HEK293 (cell line): ENCODE measurements at regions of chr17 and their contacts with region 1.

Region 1: GRCh38 chr17:37373530-37374159 is 2.1 kb upstream of the C17orf78 start:
- H3K4me3 ChIP-seq: no peak overlapping the region
- H3K27ac ChIP-seq: 0 out of 2 replicates have a peak overlapping the region, but pooled peaks have one; percentile 30
- H3K4me1 ChIP-seq: no peaks in the 10 kb centered on the region; the same call in 1 of the 2 replicates
- CTCF ChIP-seq: peak; percentile 99

Region 2: DNA sequence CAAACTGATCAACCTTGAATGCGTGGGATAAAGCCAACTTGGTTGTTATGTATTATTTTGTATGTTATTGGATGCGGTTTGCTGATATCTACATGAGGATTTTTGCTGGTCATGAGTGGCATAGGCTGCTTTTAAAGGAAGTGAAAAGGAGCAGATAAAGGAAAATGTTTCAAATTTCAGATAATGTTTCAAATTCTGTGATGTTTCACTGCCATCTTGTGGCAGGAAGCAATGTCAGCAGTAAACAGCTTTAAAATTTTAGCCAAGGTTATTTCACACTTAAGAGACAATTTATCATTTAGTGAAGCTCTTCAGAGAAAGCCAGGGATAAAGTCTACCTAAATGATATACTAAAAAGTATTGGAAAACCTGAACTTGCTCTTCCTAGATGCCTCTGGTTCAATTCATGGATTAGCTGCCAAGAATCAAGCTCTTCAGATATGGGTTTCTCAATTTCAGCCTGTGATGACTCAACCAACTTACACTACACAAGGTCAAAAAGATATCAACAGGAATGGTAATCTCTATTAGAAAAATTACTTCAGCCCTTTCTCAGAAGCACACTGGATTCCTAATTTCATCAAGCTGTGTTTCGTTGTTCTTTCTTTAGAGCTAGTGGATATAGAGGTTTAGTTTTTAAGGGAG is 133.8 kb before region 1 on chr17:
- CTCF ChIA-PET with region 1: interaction called, 16 read pairs
- POLR2A ChIA-PET with region 1: no interaction called
- H3K4me3 ChIP-seq: no peak overlapping the region
- H3K27ac ChIP-seq: no peak overlapping the region
- H3K4me1 ChIP-seq: no peaks in the 10 kb centered on the region
- CTCF ChIP-seq: 0 out of 2 replicates have a peak, but pooled peaks have one; percentile 38

Region 3: DNA sequence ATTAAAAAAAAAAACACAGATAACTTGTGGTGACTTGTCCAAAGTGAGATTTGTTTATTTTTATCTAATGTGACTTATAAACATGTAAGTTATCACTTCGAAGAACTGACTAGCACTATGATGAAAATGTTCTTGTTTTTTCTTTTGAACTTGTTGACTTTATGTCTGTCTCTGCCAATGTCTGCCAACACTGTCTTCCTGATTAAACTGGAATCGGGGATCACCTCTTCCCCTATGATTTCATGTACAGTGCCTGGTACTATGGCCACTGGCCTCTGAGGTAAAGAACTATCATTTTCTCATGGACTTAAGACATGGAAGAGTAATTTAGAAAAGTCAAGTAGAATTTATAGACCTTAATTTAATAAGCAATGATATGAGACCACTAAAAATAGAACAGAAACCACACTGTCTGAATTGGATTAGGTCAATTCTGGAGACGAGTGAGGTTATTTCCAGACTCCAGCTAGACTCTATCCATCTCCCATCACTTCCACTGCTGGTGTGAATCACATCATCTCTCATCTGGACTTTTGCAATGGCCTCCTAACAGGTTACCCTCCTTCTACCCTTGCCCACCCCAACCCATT is 11.0 kb after region 1 on chr17:
- CTCF ChIA-PET with region 1: interaction called, 141 read pairs
- POLR2A ChIA-PET with region 1: interaction called, 4 read pairs
- H3K4me3 ChIP-seq: no peak overlapping the region
- H3K27ac ChIP-seq: no peak overlapping the region
- H3K4me1 ChIP-seq: 0 out of 2 replicates have a peak, but pooled peaks cover 2% of the 10 kb centered on the region
- CTCF ChIP-seq: no peak

Region 4: GRCh38 chr17:37399404-37399803 is 25.8 kb after region 1 on chr17:
- CTCF ChIA-PET with region 1: interaction called, 141 read pairs
- POLR2A ChIA-PET with region 1: no interaction called
- H3K4me3 ChIP-seq: no peak overlapping the region
- H3K27ac ChIP-seq: no peak overlapping the region
- H3K4me1 ChIP-seq: no peaks in the 10 kb centered on the region
- CTCF ChIP-seq: no peak

Region 5: GRCh38 chr17:37438141-37438540 is 64.5 kb after region 1 on chr17:
- CTCF ChIA-PET with region 1: no interaction called
- POLR2A ChIA-PET with region 1: no interaction called
- H3K4me3 ChIP-seq: no peak overlapping the region
- H3K27ac ChIP-seq: no peak overlapping the region
- H3K4me1 ChIP-seq: no peaks in the 10 kb centered on the region
- CTCF ChIP-seq: no peak

Region 6: DNA sequence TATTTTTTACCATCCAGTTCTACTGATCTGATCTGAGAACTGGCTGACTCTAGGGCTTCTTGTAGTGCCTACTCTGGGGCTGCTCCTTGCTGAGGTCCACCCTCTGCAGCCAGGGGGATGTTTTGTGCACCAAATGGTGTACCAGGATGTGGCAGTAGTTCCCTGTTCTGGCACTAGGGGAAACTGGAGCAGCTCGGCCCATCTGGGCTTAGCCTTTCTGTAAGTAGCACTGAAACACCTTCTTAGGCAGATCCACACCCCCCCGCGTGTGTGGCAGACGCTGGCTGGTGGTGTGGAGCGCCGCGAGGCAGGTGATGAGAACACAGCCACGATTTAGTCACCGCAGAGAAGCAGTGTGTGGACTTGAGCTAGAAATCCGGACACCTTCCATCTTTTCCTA is 133.0 kb after region 1 on chr17:
- CTCF ChIA-PET with region 1: no interaction called
- POLR2A ChIA-PET with region 1: no interaction called
- H3K4me3 ChIP-seq: no peak overlapping the region
- H3K27ac ChIP-seq: no peak overlapping the region
- H3K4me1 ChIP-seq: no peaks in the 10 kb centered on the region
- CTCF ChIP-seq: peak; percentile 66

Region 7: GRCh38 chr17:37570527-37571093 is 197.0 kb after region 1 on chr17:
- CTCF ChIA-PET with region 1: interaction called, 39 read pairs
- POLR2A ChIA-PET with region 1: no interaction called
- H3K4me3 ChIP-seq: no peak overlapping the region
- H3K27ac ChIP-seq: no peak overlapping the region
- H3K4me1 ChIP-seq: peaks cover 10% of the 10 kb centered on the region
- CTCF ChIP-seq: peak; percentile 82